ENCODE measurements at regions of chr7 and their contacts with region 1.

Region 1: DNA sequence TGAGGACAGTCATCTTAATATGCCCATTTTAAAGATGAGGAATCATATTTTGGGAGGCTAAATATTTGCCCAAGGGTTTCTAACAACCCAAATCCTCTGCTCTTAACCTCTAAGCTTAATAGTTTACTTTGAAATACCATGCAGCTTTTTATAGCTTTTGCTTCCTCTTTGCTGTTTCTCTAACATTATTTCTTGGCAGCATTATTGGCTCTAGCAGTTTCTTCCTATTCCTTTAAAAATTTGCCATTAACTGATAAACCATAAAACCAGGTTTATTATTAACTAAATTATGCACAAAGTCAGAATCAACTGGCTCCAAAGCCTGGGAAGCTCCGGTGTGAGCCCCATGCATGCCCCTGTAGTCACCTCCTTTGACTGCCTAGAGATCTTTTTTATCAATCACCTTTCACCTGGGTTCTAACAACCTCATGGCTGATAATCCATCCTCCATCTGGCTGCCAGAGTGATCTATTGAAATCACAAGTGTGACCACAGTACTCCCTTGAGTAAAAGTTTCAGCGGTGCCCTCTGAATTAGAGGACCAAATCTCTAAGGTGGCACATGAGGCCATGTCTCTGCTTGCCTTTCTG is 62.4 kb downstream of the ITGB8 start:
- DNase-seq: peak; percentile 74
- ATAC-seq: peak; percentile 81
- H3K4me3 ChIP-seq: peak overlapping the region; percentile 40
- H3K27ac ChIP-seq: peak overlapping the region; percentile 97
- H3K4me1 ChIP-seq: peaks cover 49% of the 10 kb centered on the region
- H3K27me3 ChIP-seq: no peaks in the 10 kb centered on the region
- CTCF ChIP-seq: no peak

Region 2: GRCh38 chr7:20352573-20353304 is 40.4 kb before region 1 on chr7:
- CTCF ChIA-PET with region 1: no interaction called
- POLR2A ChIA-PET with region 1: no interaction called
- intact Hi-C with region 1: loop called (anchors 1 kb)
- DNase-seq: peak; percentile 97
- ATAC-seq: peak; percentile 94
- H3K4me3 ChIP-seq: peak overlapping the region; percentile 45
- H3K27ac ChIP-seq: peak overlapping the region; percentile 95
- H3K4me1 ChIP-seq: peaks cover 46% of the 10 kb centered on the region
- H3K27me3 ChIP-seq: no peaks in the 10 kb centered on the region
- CTCF ChIP-seq: no peak

Region 3: GRCh38 chr7:20508109-20508508 is 115.0 kb after region 1 on chr7:
- CTCF ChIA-PET with region 1: no interaction called
- POLR2A ChIA-PET with region 1: no interaction called
- intact Hi-C with region 1: loop called (anchors 5 kb)
- DNase-seq: peak; percentile 12
- ATAC-seq: no peak
- H3K4me3 ChIP-seq: no peak overlapping the region
- H3K27ac ChIP-seq: no peak overlapping the region
- H3K4me1 ChIP-seq: peaks cover 19% of the 10 kb centered on the region
- H3K27me3 ChIP-seq: no peaks in the 10 kb centered on the region
- CTCF ChIP-seq: peak; percentile 31; the same call in 1 of the 2 replicates

Measured in PC-3 (cell line).